Left ventricle myocardium superior (tissue), 1 donor: ENCODE measurements at regions of chr4 and their contacts with region 1.

Region 1: DNA sequence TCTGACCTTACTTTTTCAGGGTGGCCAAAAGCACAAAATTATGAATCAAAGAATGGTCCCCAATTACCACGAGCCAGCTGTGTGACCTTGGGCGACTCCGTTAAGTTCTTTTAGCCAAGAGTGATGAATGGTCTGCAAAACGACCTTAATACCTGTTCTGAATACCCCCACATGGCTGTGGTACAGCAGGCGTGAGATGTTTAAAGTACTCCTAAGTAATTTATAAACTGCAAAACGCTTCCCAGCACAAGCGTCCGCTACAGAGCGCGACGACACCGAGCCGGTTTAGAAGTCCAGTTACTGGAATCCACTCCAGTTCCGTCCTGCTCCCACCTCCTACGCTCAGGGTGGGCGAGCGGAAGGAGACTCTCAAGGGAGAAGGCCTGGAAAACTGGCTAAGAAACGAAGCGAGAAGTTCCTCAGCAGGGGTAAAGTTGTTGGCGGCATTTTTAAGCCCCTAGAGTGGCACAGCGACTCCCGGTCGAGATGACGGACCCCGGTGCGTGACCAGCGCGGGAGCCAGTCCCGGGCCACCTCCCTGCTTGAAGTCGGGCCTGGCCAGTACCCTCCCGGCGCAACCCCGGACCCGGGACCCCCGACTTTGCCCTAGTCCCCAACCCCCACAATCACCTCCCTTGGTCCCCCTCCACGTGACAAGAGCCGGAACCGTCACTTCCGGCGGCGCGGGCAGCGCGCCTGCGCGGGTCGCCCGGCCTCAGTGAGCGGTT is 683 bp upstream of the BMP2K start:
- DNase-seq: peak; percentile 93
- ATAC-seq: peak; percentile 93

Region 2: DNA sequence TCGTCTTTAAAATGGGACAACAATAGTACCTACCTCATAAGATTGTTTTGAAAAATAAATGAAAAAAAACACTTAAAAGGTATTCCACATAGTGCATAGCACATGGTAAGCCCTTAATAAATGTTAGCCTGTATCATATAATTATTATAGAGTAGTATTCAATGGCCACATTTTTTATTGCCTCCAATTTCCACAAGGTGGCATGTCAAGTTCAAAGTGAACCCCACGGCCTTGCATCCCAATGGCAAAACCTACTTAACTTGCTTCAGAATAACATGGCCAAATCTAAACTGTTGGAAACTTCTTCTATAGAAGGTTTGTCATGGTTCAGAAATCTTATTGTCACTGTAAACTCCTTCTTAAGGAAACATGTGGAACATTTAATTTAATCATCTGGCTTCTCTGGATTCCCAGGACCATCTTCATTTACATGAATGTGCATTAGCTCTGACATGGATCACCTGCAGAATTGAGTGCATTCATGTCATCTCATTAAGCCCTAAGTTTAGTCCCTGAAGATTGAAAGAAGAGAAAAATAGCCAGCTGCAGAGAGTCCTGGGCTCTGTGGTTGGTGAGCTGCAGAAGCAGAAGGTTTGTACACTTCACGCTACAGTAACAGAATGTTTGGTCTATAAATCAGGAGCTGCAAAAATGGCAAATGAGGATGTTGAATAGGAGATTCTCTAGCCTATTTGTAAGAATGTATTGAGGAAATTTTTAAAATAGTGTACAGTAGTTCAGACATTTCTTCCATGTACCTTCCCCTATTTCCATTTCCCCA is 162.9 kb before region 1 on chr4:
- intact Hi-C with region 1: loop called (anchors 10 kb)
- DNase-seq: no peak
- ATAC-seq: peak; percentile 82

Region 3: GRCh38 chr4:78644744-78645330 is 130.6 kb before region 1 on chr4:
- intact Hi-C with region 1: loop called (anchors 10 kb)
- DNase-seq: peak; percentile 35
- ATAC-seq: peak; percentile 91